ENCODE measurements at regions of chr7 and their contacts with region 1.

Region 1: GRCh38 chr7:15720849-15721471 is 34.5 kb upstream of the MEOX2 start:
- DNase-seq: peak; percentile 47
- H3K4me3 ChIP-seq: no peak overlapping the region
- H3K27ac ChIP-seq: no peak overlapping the region
- H3K4me1 ChIP-seq: no peaks in the 10 kb centered on the region
- H3K27me3 ChIP-seq: no peaks in the 10 kb centered on the region

Region 2: GRCh38 chr7:16062269-16062668 is 341.3 kb after region 1 on chr7:
- in situ Hi-C with region 1: loop called (anchors 10 kb)
- DNase-seq: peak; percentile 69
- H3K4me3 ChIP-seq: no peak overlapping the region
- H3K27ac ChIP-seq: no peak overlapping the region
- H3K4me1 ChIP-seq: peaks cover 19% of the 10 kb centered on the region
- H3K27me3 ChIP-seq: peaks cover 20% of the 10 kb centered on the region